Activated T-helper 1 cell treated with anti-CD3 and anti-CD28 coated beads, Interleukin-12 subunit alpha, Interleukin-12 subunit beta, Interleukin-2, Interleukin-4 antibody, amounts not matched to agents 30 ng/mL and 10 ng/mL and 1 ng/mL, durations not matched to agents 14 hours and 24 hours and 36 hours (primary cell): ENCODE measurements at regions of chr2 and their contacts with region 1.

Region 1: DNA sequence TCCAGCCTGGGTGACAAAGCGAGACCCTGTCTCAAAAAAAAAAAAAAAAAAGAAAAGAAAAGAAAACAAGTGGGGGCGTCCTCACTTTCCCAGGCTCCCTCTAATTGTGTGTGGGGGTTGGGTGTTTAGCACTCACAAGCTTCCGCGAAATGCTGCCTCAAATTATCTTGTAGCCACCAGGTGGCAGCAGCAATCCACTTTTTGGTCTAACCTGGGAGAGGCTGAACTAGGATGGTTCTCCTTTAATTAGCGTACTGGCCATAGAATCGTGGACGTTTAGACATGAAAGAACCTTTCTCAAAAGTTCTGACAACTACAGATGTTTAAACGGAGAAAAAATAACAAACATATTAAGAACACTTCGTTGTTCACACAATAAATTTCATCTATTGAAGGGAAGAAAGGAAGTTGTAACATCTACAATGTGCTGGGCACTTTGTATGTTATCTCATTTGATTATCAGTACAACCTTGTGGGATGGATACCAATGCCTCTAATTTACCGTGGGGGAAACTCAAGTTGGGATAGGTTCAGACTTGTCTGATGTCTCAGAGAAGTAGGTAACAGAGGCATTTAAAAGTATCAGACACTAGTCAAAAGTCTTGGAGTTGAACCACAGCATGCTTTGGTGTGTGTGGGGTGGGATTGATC is 122.7 kb upstream of the NABP1 start:
- DNase-seq: peak; percentile 70
- H3K4me3 Mint-ChIP-seq: no peak overlapping the region
- H3K27ac Mint-ChIP-seq: no peak overlapping the region
- H3K4me1 Mint-ChIP-seq: peaks cover 10% of the 10 kb centered on the region
- H3K27me3 Mint-ChIP-seq: peaks cover 25% of the 10 kb centered on the region

Region 2: DNA sequence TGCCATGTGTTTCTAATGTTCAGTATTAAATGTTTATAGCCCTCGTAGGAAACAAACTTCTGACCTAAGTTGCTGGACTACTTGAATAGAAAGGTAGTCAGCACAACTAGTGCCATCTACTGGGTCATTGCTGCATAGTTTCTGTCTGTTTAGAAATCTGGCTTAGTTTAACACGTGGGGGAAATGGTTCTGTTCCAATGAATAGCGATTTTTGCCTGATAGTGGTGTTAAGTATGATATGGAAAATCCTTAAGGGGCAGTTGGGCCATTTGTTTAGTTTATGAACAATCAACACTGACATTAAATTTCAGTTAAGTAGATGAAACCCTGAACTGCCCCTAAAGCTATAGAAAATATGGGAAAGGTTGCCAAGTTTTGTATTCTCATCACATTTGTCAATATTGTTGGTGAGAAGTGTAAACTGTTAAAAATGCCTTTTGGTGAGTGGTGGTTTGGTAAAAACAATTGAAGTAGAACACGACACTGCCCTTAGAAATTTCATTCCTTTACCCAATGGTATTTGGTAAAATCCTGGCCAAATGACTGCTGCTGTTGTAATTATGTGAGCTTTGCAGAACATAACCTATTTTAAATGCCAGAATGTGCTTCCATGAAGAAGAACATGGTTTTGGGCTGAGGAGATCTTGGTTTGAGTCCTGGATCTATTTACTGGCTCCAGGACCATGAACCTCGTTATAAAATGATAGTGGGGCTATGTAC is 136.0 kb after region 1 on chr2:
- intact Hi-C with region 1: loop called (anchors 1 kb)
- DNase-seq: peak; percentile 31
- H3K4me3 Mint-ChIP-seq: no peak overlapping the region
- H3K27ac Mint-ChIP-seq: peak overlapping the region; percentile 67
- H3K4me1 Mint-ChIP-seq: peaks cover 60% of the 10 kb centered on the region
- H3K27me3 Mint-ChIP-seq: no peaks in the 10 kb centered on the region

Region 3: DNA sequence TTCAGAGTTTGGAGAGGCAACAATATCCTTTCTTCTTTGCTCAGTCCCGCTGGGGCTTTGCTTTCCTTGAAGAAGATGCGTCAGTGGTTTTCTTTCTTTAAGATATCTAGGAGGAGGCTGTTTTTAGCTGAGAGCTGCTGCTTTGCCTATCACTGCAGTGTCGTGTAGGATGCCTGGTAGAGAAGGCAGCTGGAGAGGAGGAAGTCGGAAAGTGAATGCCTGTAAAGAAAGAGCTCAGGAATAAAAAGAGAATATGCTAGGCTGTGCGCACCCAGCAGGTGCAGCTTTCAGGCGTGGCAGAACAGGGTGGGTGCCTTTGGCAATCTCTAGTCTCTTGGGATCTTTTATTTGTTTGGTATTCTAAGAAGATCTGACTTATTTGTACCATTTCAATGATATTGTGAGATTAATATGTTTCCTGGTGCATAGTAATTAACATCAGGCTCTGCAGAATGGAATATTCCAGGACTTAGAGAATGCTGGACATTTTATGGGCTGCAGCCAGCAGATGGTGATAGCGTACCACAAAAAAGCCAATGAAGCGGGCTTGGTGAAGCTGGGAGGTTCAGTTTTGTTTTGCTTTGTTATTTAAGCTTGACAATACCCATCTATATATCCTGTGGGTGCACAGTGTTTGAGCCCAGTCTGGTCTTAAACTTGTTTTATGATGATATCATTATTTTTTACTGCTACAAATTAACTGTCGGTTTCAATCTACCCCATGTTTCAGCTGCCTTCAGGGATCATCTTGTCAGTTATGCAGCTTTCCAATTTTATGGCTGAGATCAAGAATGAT is 256.8 kb after region 1 on chr2:
- intact Hi-C with region 1: loop called (anchors 2 kb)
- DNase-seq: no peak
- H3K4me3 Mint-ChIP-seq: no peak overlapping the region
- H3K27ac Mint-ChIP-seq: no peak overlapping the region
- H3K4me1 Mint-ChIP-seq: no peaks in the 10 kb centered on the region
- H3K27me3 Mint-ChIP-seq: peaks cover 21% of the 10 kb centered on the region

Region 4: GRCh38 chr2:192123847-192124246 is 568.6 kb after region 1 on chr2:
- intact Hi-C with region 1: no loop called
- DNase-seq: no peak
- H3K4me3 Mint-ChIP-seq: no peak overlapping the region
- H3K27ac Mint-ChIP-seq: no peak overlapping the region
- H3K4me1 Mint-ChIP-seq: no peaks in the 10 kb centered on the region
- H3K27me3 Mint-ChIP-seq: peaks cover 7% of the 10 kb centered on the region